ENCODE measurements at regions of chr1 and their contacts with region 1.

Region 1: GRCh38 chr1:46527474-46528296 is 23.8 kb downstream of the KNCN start:
- DNase-seq: peak; percentile 61 to 69 (median 64)
- H3K4me3 ChIP-seq: no peak overlapping the region
- H3K4me3 Mint-ChIP-seq: peak overlapping the region in 2 of 8 donors; percentile 7 to 45
- H3K27ac ChIP-seq: no peak overlapping the region
- H3K27ac Mint-ChIP-seq: peak overlapping the region in 1 of 7 donors; percentile 71
- H3K4me1 ChIP-seq: peaks cover 1% of the 10 kb centered on the region
- H3K4me1 Mint-ChIP-seq: peaks cover 1 to 16% (median 5%) of the 10 kb centered on the region in 4 donors
- H3K27me3 ChIP-seq: no peaks in the 10 kb centered on the region
- H3K27me3 Mint-ChIP-seq: peaks cover 19 to 26% of the 10 kb centered on the region in 2 donors

Region 2: DNA sequence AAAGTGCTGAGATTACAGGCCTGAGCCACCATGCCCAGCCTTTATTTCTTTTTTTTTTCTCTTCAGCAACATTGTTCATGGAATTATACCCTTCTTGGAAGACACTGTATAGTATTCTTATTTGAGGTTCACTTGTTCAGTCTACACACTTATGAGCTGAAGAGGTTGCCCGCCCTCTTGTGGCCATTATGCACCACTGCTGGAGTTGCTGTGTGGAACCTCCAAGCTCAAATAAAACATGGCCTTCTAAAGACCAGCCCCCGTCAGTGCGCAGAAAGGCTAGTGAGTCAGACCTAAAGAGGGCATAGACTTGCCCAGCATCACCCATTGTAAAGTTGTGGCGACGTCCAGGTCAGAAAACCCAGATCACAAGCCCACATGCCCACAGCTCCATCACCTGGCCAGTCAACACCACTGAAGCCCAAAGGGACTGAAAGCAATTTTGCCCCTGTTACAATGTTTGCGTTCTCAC is 304.2 kb before region 1 on chr1:
- CTCF ChIA-PET with region 1: no interaction called
- POLR2A ChIA-PET with region 1: no interaction called
- intact Hi-C with region 1: no loop called
- DNase-seq: peak; percentile 41 to 59 (median 49)
- H3K4me3 ChIP-seq: no peak overlapping the region
- H3K4me3 Mint-ChIP-seq: no peak overlapping the region
- H3K27ac ChIP-seq: no peak overlapping the region
- H3K27ac Mint-ChIP-seq: peak overlapping the region in 1 of 7 donors; percentile 74
- H3K4me1 ChIP-seq: no peaks in the 10 kb centered on the region
- H3K4me1 Mint-ChIP-seq: peaks cover 0 to 5% (median 4%) of the 10 kb centered on the region in 4 donors
- H3K27me3 ChIP-seq: no peaks in the 10 kb centered on the region
- H3K27me3 Mint-ChIP-seq: no peaks in the 10 kb centered on the region

Region 3: DNA sequence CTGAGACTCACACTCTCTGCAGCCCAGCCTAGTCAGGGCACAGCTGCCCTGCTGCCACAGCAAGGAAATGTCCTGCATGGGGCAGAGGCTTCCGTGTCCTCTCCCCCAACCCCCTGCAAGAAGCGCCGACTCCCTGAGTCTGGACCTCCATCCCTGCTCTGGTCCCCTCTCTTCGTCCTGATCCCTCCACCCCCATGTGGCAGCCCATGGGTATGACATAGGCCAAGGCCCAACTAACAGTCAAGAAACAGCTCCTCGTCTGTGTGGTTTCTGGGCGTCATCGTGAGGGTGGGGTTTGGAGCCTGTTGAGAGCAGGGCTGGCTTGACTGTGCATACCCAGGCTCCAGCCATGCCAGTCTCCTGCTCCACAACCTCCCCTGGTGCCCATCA is 114.1 kb before region 1 on chr1:
- CTCF ChIA-PET with region 1: interaction called, 39 read pairs
- POLR2A ChIA-PET with region 1: no interaction called
- intact Hi-C with region 1: no loop called
- DNase-seq: peak; percentile 36 to 79 (median 46)
- H3K4me3 ChIP-seq: no peak overlapping the region
- H3K4me3 Mint-ChIP-seq: peak overlapping the region in 1 of 8 donors; percentile 24
- H3K27ac ChIP-seq: no peak overlapping the region
- H3K27ac Mint-ChIP-seq: peak overlapping the region in 6 of 7 donors; percentile 22 to 94 (median 85)
- H3K4me1 ChIP-seq: peaks cover 23% of the 10 kb centered on the region
- H3K4me1 Mint-ChIP-seq: peaks cover 0 to 32% (median 17%) of the 10 kb centered on the region in 4 donors
- H3K27me3 ChIP-seq: no peaks in the 10 kb centered on the region
- H3K27me3 Mint-ChIP-seq: no peaks in the 10 kb centered on the region

Region 4: GRCh38 chr1:46477153-46477929 is 50.3 kb before region 1 on chr1:
- CTCF ChIA-PET with region 1: interaction called, 23 read pairs
- POLR2A ChIA-PET with region 1: no interaction called
- intact Hi-C with region 1: loop called (anchors 1 kb)
- DNase-seq: peak; percentile 64 to 73 (median 67)
- H3K4me3 ChIP-seq: no peak overlapping the region
- H3K4me3 Mint-ChIP-seq: no peak overlapping the region
- H3K27ac ChIP-seq: no peak overlapping the region
- H3K27ac Mint-ChIP-seq: no peak overlapping the region
- H3K4me1 ChIP-seq: no peaks in the 10 kb centered on the region
- H3K4me1 Mint-ChIP-seq: peaks cover 0 to 5% (median 0%) of the 10 kb centered on the region in 4 donors
- H3K27me3 ChIP-seq: no peaks in the 10 kb centered on the region
- H3K27me3 Mint-ChIP-seq: peaks cover 6 to 33% of the 10 kb centered on the region in 2 donors

Region 5: GRCh38 chr1:46547481-46548383 is 20.0 kb after region 1 on chr1:
- CTCF ChIA-PET with region 1: interaction called, 6 read pairs
- POLR2A ChIA-PET with region 1: no interaction called
- intact Hi-C with region 1: loop called (anchors 2 kb)
- DNase-seq: peak in 4 of 5 donors; percentile 21 to 30 (median 26)
- H3K4me3 ChIP-seq: no peak overlapping the region
- H3K4me3 Mint-ChIP-seq: peak overlapping the region in 2 of 8 donors; percentile 41 to 46
- H3K27ac ChIP-seq: no peak overlapping the region
- H3K27ac Mint-ChIP-seq: peak overlapping the region in 5 of 7 donors; percentile 21 to 87 (median 62)
- H3K4me1 ChIP-seq: peaks cover 26% of the 10 kb centered on the region
- H3K4me1 Mint-ChIP-seq: peaks cover 13 to 34% (median 19%) of the 10 kb centered on the region in 4 donors
- H3K27me3 ChIP-seq: peaks cover 14% of the 10 kb centered on the region
- H3K27me3 Mint-ChIP-seq: peaks cover 33 to 35% of the 10 kb centered on the region in 2 donors

Region 6: DNA sequence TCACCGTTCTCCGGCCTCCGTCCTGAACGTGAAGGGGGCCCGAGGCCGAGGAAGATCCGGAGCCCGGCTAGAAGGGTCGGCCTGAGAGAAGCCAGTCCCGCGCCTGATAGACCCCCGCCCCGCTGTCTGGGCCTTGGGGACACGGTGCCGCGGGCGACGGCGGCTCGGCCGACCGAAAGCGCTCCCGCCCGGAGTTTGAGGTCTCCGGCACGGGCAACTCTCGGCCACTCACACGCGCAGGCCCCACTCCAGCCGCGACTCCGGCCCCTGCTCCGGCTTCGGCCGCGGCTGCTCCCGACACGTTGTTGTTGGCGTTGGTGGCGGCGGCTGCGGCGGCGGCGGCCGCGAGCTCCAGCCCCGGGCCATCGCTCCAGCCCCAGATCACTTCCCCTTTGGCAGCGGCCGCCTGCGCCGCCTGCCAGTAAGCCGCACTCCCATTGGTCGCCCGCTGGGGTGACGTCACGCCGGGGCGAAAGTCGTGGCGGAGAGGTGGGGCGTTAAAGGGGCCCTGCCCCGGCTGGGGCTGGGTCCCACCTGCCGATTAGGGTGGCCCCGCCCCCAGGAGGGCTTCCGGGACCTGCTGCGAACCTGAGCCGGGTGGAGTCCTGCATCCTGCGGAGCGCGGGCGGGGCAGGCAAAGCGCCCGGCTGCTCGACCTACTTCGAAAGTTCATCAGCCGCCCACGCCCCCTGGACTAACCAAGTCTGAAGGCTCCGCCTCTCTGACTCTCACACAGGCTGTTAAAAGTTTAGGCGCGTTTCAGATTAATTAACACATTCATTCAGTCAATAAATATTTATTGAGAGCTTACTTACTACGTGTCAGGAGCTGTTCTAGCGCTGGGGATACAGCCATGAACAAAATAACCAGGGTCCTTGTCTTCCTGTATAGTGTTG is 191.3 kb after region 1 on chr1 and contains the start of gene EFCAB14:
- CTCF ChIA-PET with region 1: interaction called, 19 read pairs
- POLR2A ChIA-PET with region 1: interaction called, 11 read pairs
- intact Hi-C with region 1: no loop called
- DNase-seq: peak; percentile 99 to 100 (median 99)
- H3K4me3 ChIP-seq: peak within 1 kb of the TSS; percentile 40 to 72
- H3K4me3 Mint-ChIP-seq: peak within 1 kb of the TSS; percentile 90 to 97 (median 92)
- H3K27ac ChIP-seq: peak within 1 kb of the TSS; percentile 88
- H3K27ac Mint-ChIP-seq: peak within 1 kb of the TSS; percentile 91 to 97 (median 95)
- H3K4me1 ChIP-seq: peaks cover 40% of the 10 kb centered on the region
- H3K4me1 Mint-ChIP-seq: peaks cover 31 to 53% (median 45%) of the 10 kb centered on the region in 4 donors
- H3K27me3 ChIP-seq: no peaks in the 10 kb centered on the region
- H3K27me3 Mint-ChIP-seq: no peaks in the 10 kb centered on the region
- total RNA-seq, gene EFCAB14: 96.7 to 98.5 TPM